A673 (cell line): ENCODE measurements at regions of chr9 and their contacts with region 1.

Region 1: GRCh38 chr9:29625292-29625731 is 2052.0 kb upstream of the C9orf72 start:
- DNase-seq: peak; percentile 98
- H3K4me3 ChIP-seq: no peak overlapping the region
- H3K27ac ChIP-seq: peak overlapping the region; percentile 27
- H3K4me1 ChIP-seq: peaks cover 29% of the 10 kb centered on the region
- H3K27me3 ChIP-seq: no peaks in the 10 kb centered on the region
- CTCF ChIP-seq: no peak

Region 2: GRCh38 chr9:29556317-29556716 is 69.0 kb before region 1 on chr9:
- CTCF ChIA-PET with region 1: no interaction called
- POLR2A ChIA-PET with region 1: no interaction called
- intact Hi-C with region 1: loop called (anchors 2 kb)
- DNase-seq: peak; percentile 94
- H3K4me3 ChIP-seq: no peak overlapping the region
- H3K27ac ChIP-seq: peak overlapping the region; percentile 81
- H3K4me1 ChIP-seq: peaks cover 20% of the 10 kb centered on the region
- H3K27me3 ChIP-seq: no peaks in the 10 kb centered on the region
- CTCF ChIP-seq: no peak

Region 3: GRCh38 chr9:29613773-29614172 is 11.5 kb before region 1 on chr9:
- CTCF ChIA-PET with region 1: no interaction called
- POLR2A ChIA-PET with region 1: no interaction called
- intact Hi-C with region 1: no loop called
- DNase-seq: no peak
- H3K4me3 ChIP-seq: no peak overlapping the region
- H3K27ac ChIP-seq: no peak overlapping the region
- H3K4me1 ChIP-seq: peaks cover 23% of the 10 kb centered on the region
- H3K27me3 ChIP-seq: no peaks in the 10 kb centered on the region
- CTCF ChIP-seq: no peak

Region 4: DNA sequence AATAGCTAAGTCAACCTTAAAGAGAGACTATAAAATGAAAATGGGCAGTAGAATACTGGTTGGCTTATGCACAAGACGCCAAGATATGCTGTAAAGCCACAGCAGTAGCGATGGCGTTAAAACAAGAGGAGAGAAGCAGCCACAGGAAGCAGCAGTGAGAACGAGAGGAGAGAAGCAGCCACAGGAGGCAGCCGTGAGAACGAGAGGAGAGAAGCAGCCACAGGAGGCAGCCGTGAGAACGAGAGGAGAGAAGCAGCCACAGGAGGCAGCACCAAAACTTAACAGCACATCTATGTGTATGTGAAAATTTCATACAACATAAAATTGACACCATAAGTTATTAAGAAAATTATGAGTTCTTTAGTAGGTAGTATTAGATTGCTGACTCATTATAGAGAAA is 440.6 kb after region 1 on chr9:
- CTCF ChIA-PET with region 1: no interaction called
- POLR2A ChIA-PET with region 1: no interaction called
- intact Hi-C with region 1: no loop called
- DNase-seq: no peak
- H3K4me3 ChIP-seq: no peak overlapping the region
- H3K27ac ChIP-seq: no peak overlapping the region
- H3K4me1 ChIP-seq: no peaks in the 10 kb centered on the region
- H3K27me3 ChIP-seq: no peaks in the 10 kb centered on the region
- CTCF ChIP-seq: peak; percentile 37